ENCODE measurements at regions of chr7 and their contacts with region 1.

Region 1: DNA sequence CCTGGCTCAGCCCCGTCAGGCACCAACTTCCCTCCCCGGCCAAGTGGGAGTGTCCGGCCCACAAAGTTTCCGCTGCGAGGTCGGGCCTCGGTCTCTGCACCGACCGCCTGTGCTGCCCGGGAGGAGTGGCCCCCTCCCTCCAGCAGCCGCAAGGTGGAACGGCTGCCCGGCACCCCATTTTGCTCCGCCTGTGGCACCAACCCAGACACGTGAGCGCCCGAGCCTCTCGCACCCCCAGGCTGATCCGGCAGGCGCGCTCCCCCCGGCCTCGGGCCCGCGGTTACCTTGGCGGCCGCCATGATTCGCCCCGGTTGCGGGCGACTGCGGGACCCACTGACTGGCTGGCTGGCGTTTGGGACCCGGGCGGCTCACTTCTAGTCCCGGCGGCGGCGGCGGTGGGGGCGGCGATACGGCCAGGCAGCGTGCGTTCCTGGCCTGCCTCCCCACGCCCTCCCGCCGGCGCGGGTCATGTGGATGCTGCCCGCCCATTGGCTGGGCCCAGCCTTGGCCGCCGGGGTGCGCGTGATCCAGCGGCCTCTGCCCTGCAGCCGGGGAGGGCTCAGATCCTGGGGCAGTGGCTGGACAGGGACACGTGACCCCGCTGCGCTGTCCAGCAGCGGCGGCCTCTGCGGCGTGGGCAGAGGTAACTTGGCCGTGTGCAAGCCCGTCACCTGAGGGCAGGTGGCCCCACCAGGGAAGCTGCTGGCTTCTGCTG is at the start of gene SLC25A13:
- DNase-seq: peak; percentile 81
- H3K4me3 ChIP-seq: peak within 1 kb of the TSS; percentile 78 to 95 (median 81)
- H3K27ac ChIP-seq: peak within 1 kb of the TSS; percentile 85
- H3K4me1 ChIP-seq: peaks cover 5% of the 10 kb centered on the region
- H3K27me3 ChIP-seq: no peaks in the 10 kb centered on the region
- CTCF ChIP-seq: no peak
- total RNA-seq, gene SLC25A13: 31.5 to 33.7 TPM

Region 2: GRCh38 chr7:96075510-96076349 is 246.1 kb before region 1 on chr7:
- CTCF ChIA-PET with region 1: no interaction called
- dilution Hi-C with region 1: no loop called
- in situ Hi-C with region 1: no loop called
- intact Hi-C with region 1: loop called (anchors 10 kb)
- DNase-seq: peak; percentile 26
- H3K4me3 ChIP-seq: peak overlapping the region; percentile 50 to 74 (median 61)
- H3K27ac ChIP-seq: no peak overlapping the region
- H3K4me1 ChIP-seq: peaks cover 12% of the 10 kb centered on the region
- H3K27me3 ChIP-seq: no peaks in the 10 kb centered on the region
- CTCF ChIP-seq: peak; percentile 79 to 91

Region 3: DNA sequence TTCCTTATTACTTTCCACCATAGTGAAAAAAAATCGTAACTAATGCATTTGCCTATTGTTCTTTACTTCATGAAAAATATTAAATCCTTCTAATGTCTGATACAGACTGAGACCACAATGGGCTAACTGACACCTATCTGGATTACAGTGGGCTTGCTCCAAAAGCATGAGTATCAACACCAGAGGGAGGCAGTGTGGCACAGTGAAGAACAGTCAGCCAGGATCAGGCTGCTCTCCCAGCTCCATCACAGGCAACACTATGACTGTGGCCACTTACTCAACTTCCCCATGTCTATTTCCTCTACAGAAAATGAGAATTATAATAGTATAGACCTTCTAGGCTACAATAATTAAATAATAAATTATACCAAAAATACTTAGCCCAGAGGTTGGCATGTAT is 97.1 kb before region 1 on chr7:
- CTCF ChIA-PET with region 1: no interaction called
- dilution Hi-C with region 1: no loop called
- in situ Hi-C with region 1: no loop called
- intact Hi-C with region 1: loop called (anchors 5 kb)
- DNase-seq: no peak
- H3K4me3 ChIP-seq: no peak overlapping the region
- H3K27ac ChIP-seq: no peak overlapping the region
- H3K4me1 ChIP-seq: peaks cover 6% of the 10 kb centered on the region
- H3K27me3 ChIP-seq: no peaks in the 10 kb centered on the region
- CTCF ChIP-seq: peak in 1 of 2 donors; percentile 25

Region 4: GRCh38 chr7:96236198-96237039 is 85.4 kb before region 1 on chr7:
- CTCF ChIA-PET with region 1: no interaction called
- dilution Hi-C with region 1: no loop called
- in situ Hi-C with region 1: no loop called
- intact Hi-C with region 1: no loop called
- DNase-seq: peak; percentile 35
- H3K4me3 ChIP-seq: no peak overlapping the region
- H3K27ac ChIP-seq: no peak overlapping the region
- H3K4me1 ChIP-seq: peaks cover 10% of the 10 kb centered on the region
- H3K27me3 ChIP-seq: no peaks in the 10 kb centered on the region
- CTCF ChIP-seq: no peak

Region 5: GRCh38 chr7:96870156-96870555 is 548.3 kb after region 1 on chr7:
- CTCF ChIA-PET with region 1: no interaction called
- dilution Hi-C with region 1: no loop called
- in situ Hi-C with region 1: no loop called
- intact Hi-C with region 1: loop called (anchors 5 kb)
- DNase-seq: peak; percentile 68
- H3K4me3 ChIP-seq: no peak overlapping the region
- H3K27ac ChIP-seq: peak overlapping the region; percentile 42
- H3K4me1 ChIP-seq: peaks cover 19% of the 10 kb centered on the region
- H3K27me3 ChIP-seq: no peaks in the 10 kb centered on the region
- CTCF ChIP-seq: no peak